SK-N-SH (cell line): ENCODE measurements at regions of chr7 and their contacts with region 1.

Region 1: GRCh38 chr7:126803060-126803665 is 449.6 kb downstream of the GRM8 start:
- DNase-seq: peak; percentile 69
- H3K4me3 ChIP-seq: no peak overlapping the region; a peak in 1 of 4 replicates
- H3K27ac ChIP-seq: no peak overlapping the region; a peak in 1 of 4 replicates
- H3K4me1 ChIP-seq: peaks cover 0 to 10% of the 10 kb centered on the region in 2 experiments; a peak in 2 of 4 replicates
- H3K27me3 ChIP-seq: no peaks in the 10 kb centered on the region
- CTCF ChIP-seq: peak; percentile 94
- EP300 ChIP-seq: no peak
- RAD21 ChIP-seq: peak; percentile 95

Region 2: GRCh38 chr7:126780993-126781392 is 22.2 kb before region 1 on chr7:
- CTCF ChIA-PET with region 1: interaction called, 12 read pairs
- POLR2A ChIA-PET with region 1: interaction called, 3 read pairs
- DNase-seq: no peak
- H3K4me3 ChIP-seq: no peak overlapping the region
- H3K27ac ChIP-seq: no peak overlapping the region
- H3K4me1 ChIP-seq: no peaks in the 10 kb centered on the region
- H3K27me3 ChIP-seq: no peaks in the 10 kb centered on the region
- CTCF ChIP-seq: no peak
- EP300 ChIP-seq: no peak
- RAD21 ChIP-seq: no peak

Region 3: GRCh38 chr7:126790763-126791162 is 12.4 kb before region 1 on chr7:
- CTCF ChIA-PET with region 1: interaction called, 48 read pairs
- POLR2A ChIA-PET with region 1: no interaction called
- DNase-seq: no peak
- H3K4me3 ChIP-seq: no peak overlapping the region
- H3K27ac ChIP-seq: no peak overlapping the region
- H3K4me1 ChIP-seq: peaks cover 0 to 3% of the 10 kb centered on the region in 2 experiments; a peak in 2 of 4 replicates
- H3K27me3 ChIP-seq: no peaks in the 10 kb centered on the region
- CTCF ChIP-seq: peak; percentile 35; the same call in 1 of the 2 replicates
- EP300 ChIP-seq: no peak
- RAD21 ChIP-seq: no peak

Region 4: GRCh38 chr7:126937171-126937570 is 134.0 kb after region 1 on chr7:
- CTCF ChIA-PET with region 1: interaction called, 10 read pairs
- POLR2A ChIA-PET with region 1: no interaction called
- DNase-seq: no peak
- H3K4me3 ChIP-seq: no peak overlapping the region
- H3K27ac ChIP-seq: no peak overlapping the region
- H3K4me1 ChIP-seq: no peaks in the 10 kb centered on the region
- H3K27me3 ChIP-seq: no peaks in the 10 kb centered on the region
- CTCF ChIP-seq: no peak
- EP300 ChIP-seq: no peak
- RAD21 ChIP-seq: no peak